Ovary (tissue), 10 donors: ENCODE measurements at regions of chr2 and their contacts with region 1.

Region 1: DNA sequence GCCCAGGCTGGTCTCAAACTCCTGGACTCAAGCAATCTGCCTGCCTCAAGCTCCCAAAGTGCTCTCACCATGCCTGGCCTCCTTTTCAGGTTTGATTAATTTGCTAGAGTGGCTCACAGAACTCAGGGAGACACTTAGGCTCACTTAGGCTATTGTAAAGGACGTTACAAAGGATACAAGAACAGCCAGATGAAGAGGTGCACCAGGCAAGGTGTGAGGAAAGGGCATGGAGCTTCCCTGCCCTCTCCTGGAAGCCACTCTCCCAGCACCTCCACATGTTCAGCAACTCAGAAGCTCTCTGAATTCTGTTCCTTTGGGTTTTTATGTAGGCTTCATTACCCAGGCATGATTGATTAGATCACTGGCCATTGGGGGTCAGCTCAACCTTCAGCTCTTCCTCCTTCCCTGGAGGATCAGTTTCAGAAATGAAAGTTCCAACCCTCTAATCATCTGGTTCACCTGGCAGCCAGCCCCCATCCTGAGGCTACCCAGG is 78.7 kb upstream of the RGPD5 start:
- DNase-seq: peak in 1 of 5 donors; percentile 13
- H3K4me3 ChIP-seq: no peak overlapping the region
- H3K27ac ChIP-seq: no peak overlapping the region
- H3K4me1 ChIP-seq: no peaks in the 10 kb centered on the region
- H3K27me3 ChIP-seq: no peaks in the 10 kb centered on the region
- CTCF ChIP-seq: peak in 2 of 3 donors; percentile 11 to 12
- EP300 ChIP-seq: no peak
- POLR2A ChIP-seq: no peak

Region 2: DNA sequence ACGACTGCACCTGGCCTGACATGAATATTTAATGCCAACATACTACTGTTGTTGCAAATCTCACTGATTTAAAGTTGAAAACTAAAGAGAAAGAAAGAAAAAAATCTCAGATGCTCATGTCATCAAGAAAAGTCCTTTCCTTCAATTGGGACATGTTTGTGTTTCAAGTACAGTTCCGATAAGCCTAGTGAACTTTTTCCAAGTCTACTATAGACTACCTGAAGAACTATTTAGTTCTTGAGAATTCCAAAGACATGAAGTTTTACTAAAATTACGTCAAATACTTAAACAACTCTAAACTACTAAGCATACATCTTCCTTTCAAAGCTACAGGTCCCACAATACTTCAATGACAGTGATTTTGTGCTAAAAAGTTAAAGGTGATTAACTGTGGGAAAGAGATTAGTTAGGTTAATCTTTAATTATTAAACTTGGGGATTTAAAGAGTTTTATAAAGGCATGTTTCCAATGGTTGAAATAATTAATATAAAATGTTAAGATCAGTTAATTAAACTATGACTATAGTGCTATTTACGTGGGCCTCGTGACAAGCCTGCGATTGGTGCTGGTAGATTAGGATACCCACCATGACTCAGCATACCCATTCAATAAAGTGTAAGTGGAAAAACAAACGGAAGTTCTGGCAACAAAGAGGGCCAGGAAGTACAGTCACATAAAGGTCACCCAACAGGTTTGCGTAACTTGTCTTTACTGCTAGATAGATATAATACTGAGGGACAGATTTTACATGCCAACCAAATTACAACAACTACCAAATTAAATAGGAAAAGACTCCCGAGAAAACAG is 157.1 kb before region 1 on chr2:
- intact Hi-C with region 1: loop called in 1 of 4 experiments (anchors 10 kb)
- DNase-seq: no peak
- H3K4me3 ChIP-seq: no peak overlapping the region
- H3K27ac ChIP-seq: no peak overlapping the region
- H3K4me1 ChIP-seq: no peaks in the 10 kb centered on the region
- H3K27me3 ChIP-seq: no peaks in the 10 kb centered on the region
- CTCF ChIP-seq: no peak
- EP300 ChIP-seq: no peak
- POLR2A ChIP-seq: no peak